ENCODE measurements at regions of chr20 and their contacts with region 1.

Region 1: GRCh38 chr20:50731055-50731871 is at the start of gene PARD6B:
- DNase-seq: peak; percentile 99
- ATAC-seq: peak; percentile 85
- H3K4me3 ChIP-seq: peak within 1 kb of the TSS; percentile 59 to 94
- H3K27ac ChIP-seq: peak within 1 kb of the TSS; percentile 92
- H3K4me1 ChIP-seq: peaks cover 74 to 84% of the 10 kb centered on the region in 2 experiments
- H3K27me3 ChIP-seq: no peaks in the 10 kb centered on the region
- CTCF ChIP-seq: no peak
- POLR2A ChIP-seq: peak; percentile 35
- RAD21 ChIP-seq: no peak
- total RNA-seq, gene PARD6B: 41.3 TPM

Region 2: DNA sequence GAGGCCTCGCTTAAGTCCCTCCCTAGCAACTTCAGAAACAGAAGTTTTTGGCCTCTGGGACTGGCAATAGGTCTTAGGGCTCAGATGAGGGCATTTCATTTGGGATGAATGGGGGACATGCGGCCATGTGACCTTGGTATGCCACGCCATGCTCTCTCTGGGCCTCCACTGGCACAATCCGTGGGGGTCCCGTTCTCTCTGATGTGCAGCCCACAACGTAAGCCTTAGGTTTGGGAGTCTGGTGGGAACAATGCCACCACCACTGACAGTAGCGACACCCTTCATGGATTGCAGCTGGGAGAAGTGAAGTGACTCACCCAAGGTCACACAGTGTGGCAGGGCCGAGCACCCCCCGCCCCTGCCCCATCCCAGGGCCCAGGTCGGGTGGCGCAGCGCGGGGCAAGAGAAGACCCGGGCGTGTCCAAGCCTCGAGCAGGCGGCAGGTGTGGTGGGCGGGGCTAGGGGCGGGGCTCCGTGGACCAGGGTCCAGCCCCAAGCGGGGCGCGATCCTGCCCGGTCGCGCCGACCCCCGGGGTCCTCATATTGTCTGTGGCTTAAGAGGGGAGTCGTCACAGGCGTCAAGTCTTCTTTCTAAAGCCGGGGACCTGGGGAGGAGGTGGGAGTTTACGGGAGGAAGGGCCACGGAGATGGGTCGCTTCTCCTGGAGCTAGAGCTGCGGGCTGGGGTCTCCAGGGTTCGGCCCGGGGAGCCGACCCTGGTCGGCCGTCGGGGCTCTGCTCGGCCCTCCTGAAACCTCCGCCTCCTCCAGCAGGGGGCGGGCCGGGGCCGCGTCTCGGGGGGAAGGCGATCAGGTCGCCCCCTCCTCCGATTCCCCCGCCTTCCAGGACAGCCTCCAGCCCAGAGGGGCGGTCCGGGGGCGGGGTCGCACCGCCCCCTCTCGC is 541.3 kb before region 1 on chr20:
- CTCF ChIA-PET with region 1: no interaction called
- POLR2A ChIA-PET with region 1: no interaction called
- RAD21 ChIA-PET with region 1: no interaction called
- intact Hi-C with region 1: loop called (anchors 5 kb)
- DNase-seq: peak; percentile 57
- ATAC-seq: peak; percentile 64
- H3K4me3 ChIP-seq: peak overlapping the region; percentile 68 to 91
- H3K27ac ChIP-seq: peak overlapping the region; percentile 85; the same call in 1 of the 2 replicates
- H3K4me1 ChIP-seq: peaks cover 38 to 60% of the 10 kb centered on the region in 2 experiments
- H3K27me3 ChIP-seq: no peaks in the 10 kb centered on the region
- CTCF ChIP-seq: peak in 2 of 3 experiments; percentile 54 to 60; a peak in 4 of 6 replicates
- POLR2A ChIP-seq: no peak
- RAD21 ChIP-seq: no peak

Region 3: DNA sequence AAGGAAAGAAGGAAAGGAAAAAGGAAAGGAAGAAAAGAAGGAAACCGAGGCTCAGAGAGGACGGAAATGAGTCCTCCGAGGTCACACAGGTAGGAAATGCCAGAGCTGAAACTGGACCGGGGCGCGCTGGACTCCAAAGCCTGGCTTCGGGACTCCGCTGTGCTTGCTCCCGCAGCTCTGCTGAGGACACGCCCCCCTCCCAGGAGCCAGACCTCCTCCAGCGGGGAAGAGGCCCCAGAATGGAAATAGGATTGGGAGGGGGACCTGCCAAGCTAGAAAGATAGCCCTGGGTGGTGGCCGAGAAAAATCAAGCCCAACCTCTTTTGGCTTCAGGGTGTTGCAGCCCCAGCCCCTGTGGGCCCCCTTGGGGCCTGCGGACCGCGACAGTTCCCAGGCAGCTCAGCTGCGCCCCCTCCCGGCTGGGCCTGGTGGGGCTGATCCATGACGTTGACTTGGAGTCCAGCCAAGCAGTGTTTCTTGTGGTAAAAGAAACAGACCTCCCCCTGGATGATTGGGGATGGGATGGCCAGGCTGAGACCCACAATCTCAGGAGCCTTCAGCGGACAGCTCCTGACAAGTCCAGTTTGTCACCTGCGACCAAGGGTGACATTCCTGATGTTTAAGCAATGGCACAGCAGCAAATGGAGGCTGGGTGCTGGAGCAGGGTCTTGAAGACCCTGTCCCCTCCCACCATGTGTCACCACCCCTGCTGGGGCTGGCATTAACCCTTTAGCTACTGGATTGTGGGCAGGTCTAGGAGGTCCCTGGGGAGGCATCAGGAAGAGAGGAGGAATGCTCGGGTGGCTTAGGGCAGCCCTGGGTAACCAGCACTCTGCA is 95.4 kb before region 1 on chr20:
- CTCF ChIA-PET with region 1: interaction called, 11 read pairs
- POLR2A ChIA-PET with region 1: interaction called, 5 read pairs
- RAD21 ChIA-PET with region 1: no interaction called
- intact Hi-C with region 1: no loop called
- DNase-seq: peak; percentile 67
- ATAC-seq: peak; percentile 87
- H3K4me3 ChIP-seq: peak overlapping the region; percentile 44 to 56
- H3K27ac ChIP-seq: peak overlapping the region; percentile 11; the same call in 1 of the 2 replicates
- H3K4me1 ChIP-seq: peaks cover 13 to 30% of the 10 kb centered on the region in 2 experiments
- H3K27me3 ChIP-seq: no peaks in the 10 kb centered on the region
- CTCF ChIP-seq: peak; percentile 75 to 99 (median 99); a peak in 5 of 6 replicates
- POLR2A ChIP-seq: no peak
- RAD21 ChIP-seq: peak; percentile 64

Region 4: GRCh38 chr20:50663095-50663850 is 68.0 kb before region 1 on chr20:
- CTCF ChIA-PET with region 1: interaction called, 10 read pairs
- POLR2A ChIA-PET with region 1: interaction called, 8 read pairs
- RAD21 ChIA-PET with region 1: no interaction called
- intact Hi-C with region 1: no loop called
- DNase-seq: peak; percentile 36
- ATAC-seq: peak; percentile 75
- H3K4me3 ChIP-seq: no peak overlapping the region
- H3K27ac ChIP-seq: no peak overlapping the region
- H3K4me1 ChIP-seq: peaks cover 26 to 43% of the 10 kb centered on the region in 2 experiments; a peak in 3 of 4 replicates
- H3K27me3 ChIP-seq: no peaks in the 10 kb centered on the region
- CTCF ChIP-seq: peak; percentile 34 to 62 (median 50); a peak in 4 of 6 replicates
- POLR2A ChIP-seq: no peak
- RAD21 ChIP-seq: peak; percentile 80

Region 5: DNA sequence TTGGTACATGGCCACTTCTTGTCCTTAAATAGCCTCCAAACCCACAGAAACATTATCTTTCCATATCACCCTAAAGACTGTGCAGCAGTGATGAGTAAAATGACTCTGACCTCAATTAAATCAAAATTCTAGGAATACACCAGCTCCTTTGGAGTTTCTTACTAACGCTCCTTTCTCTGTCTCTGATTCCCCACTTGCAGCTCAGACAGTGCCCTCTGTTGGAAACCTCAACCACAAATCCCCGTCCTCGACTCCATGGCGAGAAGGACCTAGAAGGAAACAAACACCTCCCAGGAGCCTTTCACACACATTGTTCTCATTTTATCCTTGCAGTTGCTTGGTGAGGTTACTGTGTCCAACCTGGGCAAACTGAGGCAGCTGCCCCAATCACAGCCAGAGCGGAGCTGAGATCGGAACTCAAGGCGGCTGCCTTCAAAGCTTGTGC is 17.6 kb before region 1 on chr20:
- CTCF ChIA-PET with region 1: interaction called, 5 read pairs
- POLR2A ChIA-PET with region 1: interaction called, 14 read pairs
- RAD21 ChIA-PET with region 1: no interaction called
- intact Hi-C with region 1: no loop called
- DNase-seq: no peak
- ATAC-seq: peak; percentile 57
- H3K4me3 ChIP-seq: no peak overlapping the region
- H3K27ac ChIP-seq: no peak overlapping the region
- H3K4me1 ChIP-seq: peaks cover 18 to 43% of the 10 kb centered on the region in 2 experiments; a peak in 3 of 4 replicates
- H3K27me3 ChIP-seq: no peaks in the 10 kb centered on the region
- CTCF ChIP-seq: peak; percentile 27 to 51 (median 43); a peak in 5 of 6 replicates
- POLR2A ChIP-seq: no peak
- RAD21 ChIP-seq: peak; percentile 62

Region 6: GRCh38 chr20:50744143-50744792 is 13.0 kb after region 1 on chr20:
- CTCF ChIA-PET with region 1: interaction called, 5 read pairs
- POLR2A ChIA-PET with region 1: interaction called, 17 read pairs
- RAD21 ChIA-PET with region 1: interaction called, 3 to 6 read pairs
- intact Hi-C with region 1: no loop called
- DNase-seq: peak; percentile 67
- ATAC-seq: peak; percentile 75
- H3K4me3 ChIP-seq: peak overlapping the region; percentile 8 to 42; a peak in 3 of 4 replicates
- H3K27ac ChIP-seq: peak overlapping the region; percentile 93
- H3K4me1 ChIP-seq: peaks cover 80 to 91% of the 10 kb centered on the region in 2 experiments
- H3K27me3 ChIP-seq: no peaks in the 10 kb centered on the region
- CTCF ChIP-seq: peak; percentile 9 to 46 (median 24); a peak in 3 of 6 replicates
- POLR2A ChIP-seq: no peak
- RAD21 ChIP-seq: peak; percentile 72

Region 7: GRCh38 chr20:50762435-50763201 is 31.4 kb after region 1 on chr20:
- CTCF ChIA-PET with region 1: no interaction called
- POLR2A ChIA-PET with region 1: interaction called, 3 read pairs
- RAD21 ChIA-PET with region 1: no interaction called
- intact Hi-C with region 1: loop called (anchors 2 kb)
- DNase-seq: no peak
- ATAC-seq: peak; percentile 35
- H3K4me3 ChIP-seq: peak overlapping the region in 1 of 2 experiments; percentile 21; a peak in 3 of 4 replicates
- H3K27ac ChIP-seq: peak overlapping the region; percentile 92
- H3K4me1 ChIP-seq: peaks cover 63 to 96% of the 10 kb centered on the region in 2 experiments
- H3K27me3 ChIP-seq: no peaks in the 10 kb centered on the region
- CTCF ChIP-seq: no peak
- POLR2A ChIP-seq: no peak
- RAD21 ChIP-seq: no peak

Region 8: DNA sequence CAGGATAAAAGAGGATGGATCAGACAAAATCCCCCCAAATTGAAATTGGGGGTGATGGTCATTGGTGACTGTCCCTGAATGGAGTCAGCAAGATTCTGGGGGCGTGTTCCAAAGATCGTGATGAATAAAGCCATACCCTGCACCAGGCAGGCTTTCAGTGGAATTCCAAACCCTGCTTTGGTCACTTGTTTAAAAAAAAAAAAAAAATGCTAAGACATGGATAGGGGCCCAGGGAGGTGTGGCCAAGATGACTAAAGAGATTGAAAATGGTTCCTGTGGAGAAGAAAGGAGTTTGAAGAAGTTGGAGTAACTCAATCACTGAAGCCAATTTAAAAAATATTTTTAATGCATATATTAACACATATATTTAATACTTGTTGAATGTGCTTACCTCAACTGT is 453.0 kb after region 1 on chr20:
- CTCF ChIA-PET with region 1: no interaction called
- POLR2A ChIA-PET with region 1: no interaction called
- RAD21 ChIA-PET with region 1: no interaction called
- intact Hi-C with region 1: no loop called
- DNase-seq: no peak
- ATAC-seq: no peak
- H3K4me3 ChIP-seq: no peak overlapping the region
- H3K27ac ChIP-seq: no peak overlapping the region
- H3K4me1 ChIP-seq: no peaks in the 10 kb centered on the region
- H3K27me3 ChIP-seq: peaks cover 14% of the 10 kb centered on the region
- CTCF ChIP-seq: no peak
- POLR2A ChIP-seq: no peak
- RAD21 ChIP-seq: no peak